Activated CD8-positive, alpha-beta T cell treated with anti-CD3 and anti-CD28 coated beads for 36 hours (primary cell): ENCODE measurements at regions of chr6 and their contacts with region 1.

Region 1: GRCh38 chr6:105992315-105992961 is 93.7 kb upstream of the PRDM1 start:
- DNase-seq: peak; percentile 88
- ATAC-seq: peak; percentile 88
- H3K4me3 Mint-ChIP-seq: peak overlapping the region; percentile 82
- H3K27ac Mint-ChIP-seq: peak overlapping the region; percentile 81
- H3K4me1 Mint-ChIP-seq: peaks cover 16% of the 10 kb centered on the region
- H3K27me3 Mint-ChIP-seq: peaks cover 71% of the 10 kb centered on the region
- CTCF ChIP-seq: no peak

Region 2: GRCh38 chr6:105981002-105981887 is 11.2 kb before region 1 on chr6:
- CTCF ChIA-PET with region 1: interaction called, 15 read pairs
- POLR2A ChIA-PET with region 1: interaction called, 31 read pairs
- intact Hi-C with region 1: no loop called
- DNase-seq: peak; percentile 45
- ATAC-seq: peak; percentile 47
- H3K4me3 Mint-ChIP-seq: peak overlapping the region; percentile 66
- H3K27ac Mint-ChIP-seq: peak overlapping the region; percentile 67
- H3K4me1 Mint-ChIP-seq: peaks cover 38% of the 10 kb centered on the region
- H3K27me3 Mint-ChIP-seq: peaks cover 57% of the 10 kb centered on the region
- CTCF ChIP-seq: no peak